ENCODE measurements at regions of chr19 and their contacts with region 1.

Region 1: DNA sequence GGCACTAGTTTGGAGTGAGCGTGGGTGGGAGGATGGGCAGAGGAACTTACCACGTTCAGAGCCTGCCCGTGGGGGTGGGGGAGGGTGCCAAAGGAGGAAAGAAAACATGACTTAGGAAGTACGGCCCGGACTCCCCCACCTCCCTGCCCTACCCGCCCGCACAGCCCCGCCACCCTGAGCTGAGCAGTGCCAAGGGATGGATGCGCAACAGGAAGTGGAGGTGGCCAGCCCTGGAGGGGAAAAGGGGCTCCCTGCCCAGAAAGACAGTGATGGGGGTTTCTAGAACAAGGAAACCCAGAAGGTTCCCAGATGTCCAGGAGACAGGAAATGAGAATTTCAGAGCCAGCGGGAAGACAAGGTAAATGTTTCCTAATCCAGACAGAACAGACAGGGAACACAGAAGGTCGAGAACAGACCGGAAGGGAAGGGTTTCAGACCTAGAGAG is 6.3 kb downstream of the TEAD2 start:
- DNase-seq: no peak
- ATAC-seq: peak; percentile 11
- H3K4me3 ChIP-seq: peak overlapping the region in 3 of 5 experiments; percentile 31 to 54 (median 47)
- H3K4me3 Mint-ChIP-seq: peak overlapping the region; percentile 74
- H3K27ac ChIP-seq: peak overlapping the region in 1 of 2 donors; percentile 29
- H3K27ac Mint-ChIP-seq: peak overlapping the region; percentile 89
- H3K4me1 ChIP-seq: peaks cover 41 to 60% of the 10 kb centered on the region in 2 donors
- H3K4me1 Mint-ChIP-seq: peaks cover 67% of the 10 kb centered on the region
- H3K27me3 ChIP-seq: no peaks in the 10 kb centered on the region
- H3K27me3 Mint-ChIP-seq: no peaks in the 10 kb centered on the region
- CTCF ChIP-seq: no peak

Region 2: GRCh38 chr19:49287141-49287770 is 68.7 kb before region 1 on chr19:
- CTCF ChIA-PET with region 1: no interaction called
- POLR2A ChIA-PET with region 1: no interaction called
- intact Hi-C with region 1: no loop called
- DNase-seq: no peak
- ATAC-seq: no peak
- H3K4me3 ChIP-seq: no peak overlapping the region
- H3K4me3 Mint-ChIP-seq: no peak overlapping the region
- H3K27ac ChIP-seq: no peak overlapping the region
- H3K27ac Mint-ChIP-seq: peak overlapping the region; percentile 53
- H3K4me1 ChIP-seq: no peaks in the 10 kb centered on the region
- H3K4me1 Mint-ChIP-seq: peaks cover 3% of the 10 kb centered on the region
- H3K27me3 ChIP-seq: peaks cover 0 to 2% (median 0%) of the 10 kb centered on the region in 4 experiments
- H3K27me3 Mint-ChIP-seq: peaks cover 4% of the 10 kb centered on the region
- CTCF ChIP-seq: no peak

Region 3: GRCh38 chr19:49309087-49309486 is 46.8 kb before region 1 on chr19:
- CTCF ChIA-PET with region 1: interaction called, 3 read pairs
- POLR2A ChIA-PET with region 1: interaction called, 20 read pairs
- intact Hi-C with region 1: no loop called
- DNase-seq: no peak
- ATAC-seq: no peak
- H3K4me3 ChIP-seq: no peak overlapping the region
- H3K4me3 Mint-ChIP-seq: peak overlapping the region; percentile 35
- H3K27ac ChIP-seq: peak overlapping the region in 1 of 2 donors; percentile 10
- H3K27ac Mint-ChIP-seq: peak overlapping the region; percentile 78
- H3K4me1 ChIP-seq: peaks cover 16 to 38% of the 10 kb centered on the region in 2 donors
- H3K4me1 Mint-ChIP-seq: peaks cover 46% of the 10 kb centered on the region
- H3K27me3 ChIP-seq: no peaks in the 10 kb centered on the region
- H3K27me3 Mint-ChIP-seq: no peaks in the 10 kb centered on the region
- CTCF ChIP-seq: no peak

Region 4: GRCh38 chr19:49315111-49315510 is 40.8 kb before region 1 on chr19:
- CTCF ChIA-PET with region 1: no interaction called
- POLR2A ChIA-PET with region 1: interaction called, 17 read pairs
- intact Hi-C with region 1: no loop called
- DNase-seq: no peak
- ATAC-seq: no peak
- H3K4me3 ChIP-seq: no peak overlapping the region
- H3K4me3 Mint-ChIP-seq: no peak overlapping the region
- H3K27ac ChIP-seq: no peak overlapping the region
- H3K27ac Mint-ChIP-seq: no peak overlapping the region
- H3K4me1 ChIP-seq: peaks cover 13 to 14% of the 10 kb centered on the region in 2 donors
- H3K4me1 Mint-ChIP-seq: peaks cover 46% of the 10 kb centered on the region
- H3K27me3 ChIP-seq: no peaks in the 10 kb centered on the region
- H3K27me3 Mint-ChIP-seq: no peaks in the 10 kb centered on the region
- CTCF ChIP-seq: no peak